PC-3 (cell line): ENCODE measurements at regions of chr10 and their contacts with region 1.

Region 1: DNA sequence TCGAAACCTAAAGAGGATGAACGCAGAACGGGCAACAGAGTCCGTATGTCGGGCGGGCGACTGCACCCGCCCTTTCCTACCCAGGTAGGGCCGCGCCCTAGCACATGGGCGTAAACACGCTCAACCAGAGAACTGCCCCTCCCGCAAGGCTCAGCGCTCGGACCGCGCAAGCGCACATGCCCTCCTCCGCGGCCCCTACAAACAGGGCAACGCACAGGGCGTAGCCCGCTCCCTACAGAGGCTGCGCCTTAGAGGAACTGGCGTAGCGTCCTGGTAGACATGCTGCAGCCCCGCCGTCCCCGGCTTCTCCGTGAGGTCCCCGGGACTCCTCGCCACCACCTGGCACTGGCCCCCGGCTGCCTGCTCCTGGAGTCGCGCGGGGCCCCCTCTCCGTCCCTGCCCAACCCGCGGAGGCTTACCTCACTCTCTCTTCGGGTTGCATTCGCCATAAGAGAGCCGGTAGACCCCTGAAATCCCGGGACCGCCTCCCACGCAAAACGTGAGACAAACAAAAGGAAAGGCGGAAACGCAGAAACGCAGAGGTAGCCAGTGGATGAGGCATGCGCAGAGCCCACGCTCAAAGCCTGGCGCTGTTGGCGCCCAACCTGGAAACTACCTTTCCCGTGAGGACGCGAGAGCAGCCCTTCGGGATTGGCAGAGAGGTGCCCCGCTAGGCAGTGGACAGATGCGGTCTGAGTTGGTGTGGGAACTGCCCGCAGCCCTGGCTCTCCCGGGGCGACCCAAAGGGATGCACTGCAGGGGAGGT is at the start of gene ZNF33B:
- DNase-seq: peak; percentile 99
- ATAC-seq: peak; percentile 97
- H3K4me3 ChIP-seq: peak within 1 kb of the TSS; percentile 76
- H3K27ac ChIP-seq: peak within 1 kb of the TSS; percentile 92
- H3K4me1 ChIP-seq: peaks cover 15% of the 10 kb centered on the region
- H3K27me3 ChIP-seq: no peaks in the 10 kb centered on the region
- CTCF ChIP-seq: no peak
- total RNA-seq, gene ZNF33B: 6.2 and 11.7 TPM in 2 replicates

Region 2: DNA sequence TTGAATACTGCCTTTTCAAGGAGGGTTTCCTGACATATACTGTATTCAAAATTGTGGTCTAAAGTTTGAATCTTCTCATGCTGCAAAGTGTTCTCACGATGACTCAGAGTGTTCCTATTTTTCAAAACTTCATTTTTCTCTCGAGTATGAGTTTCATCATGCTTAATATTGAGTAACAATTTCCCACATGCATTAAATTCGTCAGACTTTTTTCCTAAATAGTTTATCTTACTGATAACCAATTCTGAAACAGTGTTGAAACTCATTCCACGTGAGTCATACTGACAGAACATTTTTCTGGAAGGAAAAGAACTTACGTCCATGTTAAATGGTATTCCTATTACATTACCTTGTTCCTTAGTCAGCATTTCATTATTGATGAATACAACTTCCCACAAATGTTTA is 44.0 kb before region 1 on chr10:
- CTCF ChIA-PET with region 1: no interaction called
- POLR2A ChIA-PET with region 1: no interaction called
- intact Hi-C with region 1: no loop called
- DNase-seq: no peak
- ATAC-seq: no peak
- H3K4me3 ChIP-seq: peak overlapping the region; percentile 16; the same call in 1 of the 2 replicates
- H3K27ac ChIP-seq: no peak overlapping the region
- H3K4me1 ChIP-seq: no peaks in the 10 kb centered on the region
- H3K27me3 ChIP-seq: no peaks in the 10 kb centered on the region
- CTCF ChIP-seq: no peak

Region 3: GRCh38 chr10:42652860-42653259 is 14.6 kb after region 1 on chr10:
- CTCF ChIA-PET with region 1: no interaction called
- POLR2A ChIA-PET with region 1: no interaction called
- intact Hi-C with region 1: no loop called
- DNase-seq: no peak
- ATAC-seq: no peak
- H3K4me3 ChIP-seq: no peak overlapping the region
- H3K27ac ChIP-seq: no peak overlapping the region
- H3K4me1 ChIP-seq: no peaks in the 10 kb centered on the region
- H3K27me3 ChIP-seq: peaks cover 20% of the 10 kb centered on the region; the same call in 1 of the 2 replicates
- CTCF ChIP-seq: no peak

Region 4: DNA sequence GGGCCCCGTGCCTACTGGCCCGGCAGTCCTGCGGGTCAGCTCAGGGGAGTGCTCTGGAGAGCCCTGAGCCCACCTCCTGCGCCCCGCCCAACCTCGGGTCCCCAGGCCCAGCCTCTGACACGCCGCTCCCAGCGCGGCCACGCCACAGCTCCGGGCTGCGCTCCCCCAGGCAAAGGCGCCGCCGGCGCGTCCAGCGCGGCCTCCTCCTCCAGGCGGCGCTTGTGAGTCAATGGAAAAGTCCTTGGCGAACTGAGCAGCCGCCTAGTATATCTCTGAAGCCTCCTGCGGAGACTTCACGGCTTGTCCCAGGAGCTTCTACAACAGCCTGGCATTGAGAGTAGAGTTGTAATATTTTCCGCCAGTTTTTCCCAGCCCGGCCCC is 114.9 kb after region 1 on chr10:
- CTCF ChIA-PET with region 1: no interaction called
- POLR2A ChIA-PET with region 1: no interaction called
- intact Hi-C with region 1: loop called (anchors 5 kb)
- DNase-seq: peak; percentile 89
- ATAC-seq: peak; percentile 90
- H3K4me3 ChIP-seq: peak overlapping the region; percentile 66
- H3K27ac ChIP-seq: no peak overlapping the region
- H3K4me1 ChIP-seq: peaks cover 12% of the 10 kb centered on the region
- H3K27me3 ChIP-seq: peaks cover 51% of the 10 kb centered on the region
- CTCF ChIP-seq: peak; percentile 89

Region 5: GRCh38 chr10:42782446-42783180 is 144.4 kb after region 1 on chr10 and contains the start of gene BMS1:
- CTCF ChIA-PET with region 1: no interaction called
- POLR2A ChIA-PET with region 1: no interaction called
- intact Hi-C with region 1: loop called (anchors 1 kb)
- DNase-seq: peak; percentile 96
- ATAC-seq: peak; percentile 90
- H3K4me3 ChIP-seq: peak within 1 kb of the TSS; percentile 79
- H3K27ac ChIP-seq: peak within 1 kb of the TSS; percentile 65
- H3K4me1 ChIP-seq: peaks cover 14% of the 10 kb centered on the region
- H3K27me3 ChIP-seq: no peaks in the 10 kb centered on the region
- CTCF ChIP-seq: no peak
- total RNA-seq, gene BMS1: 36.6 and 41.9 TPM in 2 replicates

Region 6: DNA sequence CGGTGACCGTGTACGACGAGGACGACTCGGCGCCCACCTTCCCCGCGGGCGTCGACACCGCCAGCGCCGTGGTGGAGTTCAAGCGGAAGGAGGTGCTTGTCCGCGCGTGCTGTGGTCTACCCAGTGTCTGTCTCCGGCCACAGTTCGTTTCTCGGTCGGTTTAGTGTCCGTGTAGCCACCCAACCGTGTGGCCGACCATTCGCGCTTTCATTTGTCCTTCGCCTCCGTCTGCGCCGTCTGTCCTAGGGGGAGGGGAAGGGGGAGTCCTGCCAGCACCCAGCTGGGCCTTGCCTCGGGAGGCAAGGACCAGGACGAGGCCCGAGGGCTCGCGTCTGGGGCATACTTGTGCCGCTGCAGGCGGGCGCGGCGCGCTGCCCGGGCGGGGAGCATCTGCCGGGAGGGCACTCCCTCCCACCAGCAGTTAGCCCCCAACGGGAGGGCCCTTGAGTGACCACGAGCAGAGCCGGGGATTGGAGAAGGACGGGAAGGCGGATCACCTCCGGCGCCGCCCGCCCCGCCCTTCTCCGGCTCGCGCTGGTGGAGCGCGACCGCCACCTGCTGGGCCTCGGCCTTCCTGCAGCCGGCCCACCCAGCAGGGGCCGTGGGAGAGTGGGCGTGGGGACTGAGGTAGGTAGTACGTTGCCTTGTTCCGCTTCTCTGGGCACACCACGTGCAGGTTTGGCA is 467.0 kb after region 1 on chr10:
- CTCF ChIA-PET with region 1: no interaction called
- POLR2A ChIA-PET with region 1: no interaction called
- intact Hi-C with region 1: loop called (anchors 5 kb)
- DNase-seq: peak; percentile 78
- ATAC-seq: peak; percentile 93
- H3K4me3 ChIP-seq: peak overlapping the region; percentile 66
- H3K27ac ChIP-seq: no peak overlapping the region
- H3K4me1 ChIP-seq: 0 out of 2 replicates have a peak, but pooled peaks cover 4% of the 10 kb centered on the region
- H3K27me3 ChIP-seq: peaks cover 4% of the 10 kb centered on the region; the same call in 1 of the 2 replicates
- CTCF ChIP-seq: peak; percentile 98